Activated naive CD4-positive, alpha-beta T cell treated with anti-CD3 and anti-CD28 coated beads, Interleukin-2, amount 10 ng/mL, durations not matched to agents 7 days and 5 days (primary cell): ENCODE measurements at regions of chr19 and their contacts with region 1.

Region 1: DNA sequence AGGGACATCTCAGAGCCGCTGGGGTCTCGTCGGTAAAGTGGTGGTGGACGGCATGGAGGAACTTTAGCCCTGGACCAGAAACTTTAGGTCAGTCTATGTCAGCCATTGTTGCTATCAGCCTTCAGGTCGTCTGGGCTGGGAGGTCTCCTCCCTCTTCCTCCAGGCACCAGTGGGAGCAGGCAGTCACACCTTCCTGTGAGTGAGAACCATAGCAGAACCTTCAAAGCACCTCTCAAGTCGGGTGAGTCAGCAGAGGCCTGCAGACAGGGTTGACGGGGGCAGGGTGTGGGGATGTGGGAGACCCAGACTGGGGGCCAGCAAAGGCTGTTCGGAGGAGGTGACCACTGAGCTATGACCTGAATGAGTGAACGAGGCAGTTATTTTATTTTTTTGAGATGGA is 15.4 kb upstream of the SBNO2 start:
- DNase-seq: peak; percentile 69
- H3K4me3 Mint-ChIP-seq: no peak overlapping the region
- H3K27ac Mint-ChIP-seq: peak overlapping the region; percentile 66
- H3K4me1 Mint-ChIP-seq: peaks cover 35% of the 10 kb centered on the region
- H3K27me3 Mint-ChIP-seq: no peaks in the 10 kb centered on the region

Region 2: GRCh38 chr19:1087813-1088415 is 101.5 kb before region 1 on chr19:
- CTCF ChIA-PET with region 1: no interaction called
- DNase-seq: peak; percentile 70
- H3K4me3 Mint-ChIP-seq: peak overlapping the region; percentile 49
- H3K27ac Mint-ChIP-seq: peak overlapping the region; percentile 88
- H3K4me1 Mint-ChIP-seq: peaks cover 55% of the 10 kb centered on the region
- H3K27me3 Mint-ChIP-seq: peaks cover 5% of the 10 kb centered on the region

Region 3: DNA sequence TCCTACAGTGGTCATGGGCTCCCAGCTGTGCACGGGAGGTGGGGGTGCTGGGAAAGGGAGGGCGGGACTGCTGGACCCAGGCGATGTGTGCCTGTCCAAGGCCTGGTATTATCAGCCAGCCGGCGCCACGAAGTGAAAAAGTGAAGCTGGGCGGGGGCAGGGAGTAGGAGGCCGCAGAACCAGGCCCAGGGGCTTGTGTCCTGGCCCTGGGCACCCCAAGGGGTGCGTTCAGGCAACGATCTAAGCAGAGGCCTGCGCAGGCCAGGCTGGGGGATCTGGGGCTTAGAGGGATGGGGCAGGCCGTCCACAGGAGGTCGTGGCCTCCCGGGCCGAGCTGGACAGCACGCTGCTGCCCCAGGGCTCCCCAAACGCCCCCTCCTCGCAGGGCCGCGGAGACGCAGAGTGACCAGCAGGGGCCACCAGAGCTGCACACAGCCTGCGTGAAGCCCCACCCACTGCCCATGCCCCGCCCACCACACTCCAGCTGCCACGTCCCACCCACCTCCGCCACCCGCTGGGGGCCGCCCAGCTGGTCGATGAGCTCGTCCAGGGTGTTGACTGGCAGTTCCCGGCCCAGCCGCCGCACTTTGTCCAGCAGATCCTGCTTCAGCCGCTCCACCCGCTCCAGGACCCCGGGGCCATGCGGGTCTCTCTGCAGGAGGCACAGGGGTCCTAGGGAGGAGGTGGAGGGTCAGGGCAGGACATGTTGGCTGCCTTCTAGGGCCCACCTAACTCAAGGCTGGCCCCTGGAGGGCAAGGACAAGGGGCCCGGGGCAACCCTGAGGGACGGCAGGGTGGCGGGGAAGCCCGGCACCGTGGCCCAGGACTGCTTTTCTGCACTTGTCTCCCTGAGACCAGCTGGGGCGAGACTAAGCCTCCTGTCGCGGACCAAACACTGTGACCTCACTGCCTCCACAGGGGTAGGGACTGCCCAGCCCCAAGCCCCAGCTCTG is 76.1 kb before region 1 on chr19:
- CTCF ChIA-PET with region 1: interaction called, 29 read pairs
- DNase-seq: peak; percentile 91
- H3K4me3 Mint-ChIP-seq: no peak overlapping the region
- H3K27ac Mint-ChIP-seq: no peak overlapping the region
- H3K4me1 Mint-ChIP-seq: peaks cover 3% of the 10 kb centered on the region
- H3K27me3 Mint-ChIP-seq: no peaks in the 10 kb centered on the region